K562 (cell line): ENCODE measurements at regions of chr12 and their contacts with region 1.

Region 1: DNA sequence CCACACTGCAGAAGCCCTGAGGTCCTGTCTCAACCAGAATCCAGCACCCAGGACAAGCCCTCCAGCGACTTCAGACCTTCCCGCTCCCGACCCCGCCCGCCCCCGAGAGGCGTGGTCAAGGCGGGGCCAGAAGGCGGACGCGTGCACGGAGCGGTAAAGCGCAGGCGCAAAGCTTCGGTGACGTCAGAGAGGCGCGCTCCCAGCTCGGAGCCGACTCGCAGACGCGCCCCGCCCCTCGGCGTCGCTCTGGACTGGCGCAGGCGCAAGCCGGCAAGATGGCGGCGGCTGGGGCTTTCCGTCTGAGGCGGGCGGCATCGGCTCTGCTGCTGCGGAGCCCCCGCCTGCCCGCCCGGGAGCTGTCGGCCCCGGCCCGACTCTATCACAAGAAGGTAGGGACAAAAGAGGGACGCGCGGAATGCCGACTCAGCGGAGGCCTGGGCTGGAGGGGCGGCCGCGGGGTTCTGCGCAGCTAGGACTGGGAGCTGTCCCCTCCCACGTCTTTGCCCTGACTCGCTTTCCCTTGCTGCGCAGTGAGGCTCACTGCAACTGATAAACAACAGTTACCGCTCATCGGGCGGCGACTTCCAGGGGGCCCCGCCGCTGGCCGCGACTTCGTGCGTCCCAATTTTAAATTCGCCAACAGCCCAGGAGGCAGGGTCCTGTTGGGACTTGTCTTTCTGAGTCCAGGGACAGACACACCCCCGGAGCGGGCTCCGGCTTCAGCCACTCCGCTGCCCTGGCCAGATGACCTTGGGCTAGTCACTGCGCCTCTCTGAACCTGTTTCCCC is at the start of gene ISCU:
- DNase-seq: peak; percentile 96 to 99 (median 98)
- ATAC-seq: peak; percentile 85
- H3K4me3 ChIP-seq: peak within 1 kb of the TSS; percentile 93
- H3K27ac ChIP-seq: peak within 1 kb of the TSS; percentile 97
- H3K4me1 ChIP-seq: peaks cover 8 to 26% of the 10 kb centered on the region in 2 experiments
- H3K27me3 ChIP-seq: no peaks in the 10 kb centered on the region
- CTCF ChIP-seq: 0 out of 6 replicates have a peak, but pooled peaks of 1 of the 3 experiments have one; percentile 5
- EP300 ChIP-seq: no peak
- POLR2A ChIP-seq: peak; percentile 87
- RAD21 ChIP-seq: no peak
- polyA plus RNA-seq, gene ISCU: 15.9 to 19.8 TPM

Region 2: GRCh38 chr12:108297895-108298760 is 264.4 kb before region 1 on chr12:
- CTCF ChIA-PET with region 1: no interaction called
- POLR2A ChIA-PET with region 1: no interaction called
- in situ Hi-C with region 1: no loop called
- intact Hi-C with region 1: no loop called
- DNase-seq: no peak
- ATAC-seq: no peak
- H3K4me3 ChIP-seq: no peak overlapping the region
- H3K27ac ChIP-seq: no peak overlapping the region
- H3K4me1 ChIP-seq: peaks cover 0 to 3% of the 10 kb centered on the region in 2 experiments; a peak in 1 of 5 replicates
- H3K27me3 ChIP-seq: peaks cover 14 to 20% of the 10 kb centered on the region in 2 experiments; a peak in 4 of 5 replicates
- CTCF ChIP-seq: no peak
- EP300 ChIP-seq: no peak
- POLR2A ChIP-seq: no peak
- RAD21 ChIP-seq: no peak

Region 3: DNA sequence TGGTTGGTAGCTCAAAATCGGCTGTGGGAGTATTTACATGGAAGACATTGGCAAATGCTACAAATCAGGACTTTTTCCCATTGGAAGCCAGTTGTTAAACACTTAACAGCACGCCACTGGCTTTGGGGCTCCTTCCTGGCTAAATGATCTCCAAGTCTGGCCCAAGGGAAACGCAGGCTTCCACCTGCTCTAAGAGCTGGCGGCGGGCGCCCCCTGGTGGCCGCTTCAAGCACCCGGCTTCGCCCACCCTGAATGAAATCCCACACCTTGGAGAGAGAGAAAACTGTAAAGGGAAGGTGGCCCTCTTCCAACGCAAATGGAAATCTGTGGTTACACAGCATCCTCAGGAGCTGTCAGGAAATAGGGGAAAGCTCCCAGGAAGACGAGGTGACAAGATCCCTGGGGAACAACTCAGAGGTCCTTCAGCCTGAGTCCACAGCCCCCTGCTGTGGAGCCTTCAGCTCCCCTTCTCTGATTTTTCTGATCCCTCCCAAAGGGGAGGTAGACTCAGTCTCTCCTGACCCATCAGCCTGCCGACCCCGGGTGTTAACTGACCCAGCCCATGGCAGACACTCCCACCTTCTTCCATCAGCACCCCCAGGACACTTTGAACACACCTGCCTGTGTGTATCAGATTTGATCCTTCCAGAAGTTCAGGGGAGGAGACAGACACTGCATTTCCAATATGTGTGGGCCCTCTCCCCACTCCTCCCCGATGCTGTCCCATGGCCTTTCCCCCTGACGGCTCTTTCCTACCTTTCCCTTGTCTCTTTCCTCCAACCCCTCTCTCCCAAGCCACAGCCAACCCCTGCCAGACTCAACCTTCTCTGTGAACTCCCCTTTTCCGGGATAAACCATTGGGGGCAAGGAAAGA is 55.8 kb after region 1 on chr12:
- CTCF ChIA-PET with region 1: interaction called, 30 read pairs
- POLR2A ChIA-PET with region 1: interaction called, 4 read pairs
- in situ Hi-C with region 1: loop called (anchors 5 kb)
- intact Hi-C with region 1: loop called (anchors 1 kb)
- DNase-seq: peak; percentile 82 to 91 (median 84)
- ATAC-seq: peak; percentile 94
- H3K4me3 ChIP-seq: no peak overlapping the region
- H3K27ac ChIP-seq: no peak overlapping the region
- H3K4me1 ChIP-seq: peaks cover 16 to 20% of the 10 kb centered on the region in 2 experiments; a peak in 3 of 5 replicates
- H3K27me3 ChIP-seq: no peaks in the 10 kb centered on the region
- CTCF ChIP-seq: peak; percentile 91 to 97 (median 96)
- EP300 ChIP-seq: no peak
- POLR2A ChIP-seq: no peak
- RAD21 ChIP-seq: peak; percentile 91 to 94

Region 4: DNA sequence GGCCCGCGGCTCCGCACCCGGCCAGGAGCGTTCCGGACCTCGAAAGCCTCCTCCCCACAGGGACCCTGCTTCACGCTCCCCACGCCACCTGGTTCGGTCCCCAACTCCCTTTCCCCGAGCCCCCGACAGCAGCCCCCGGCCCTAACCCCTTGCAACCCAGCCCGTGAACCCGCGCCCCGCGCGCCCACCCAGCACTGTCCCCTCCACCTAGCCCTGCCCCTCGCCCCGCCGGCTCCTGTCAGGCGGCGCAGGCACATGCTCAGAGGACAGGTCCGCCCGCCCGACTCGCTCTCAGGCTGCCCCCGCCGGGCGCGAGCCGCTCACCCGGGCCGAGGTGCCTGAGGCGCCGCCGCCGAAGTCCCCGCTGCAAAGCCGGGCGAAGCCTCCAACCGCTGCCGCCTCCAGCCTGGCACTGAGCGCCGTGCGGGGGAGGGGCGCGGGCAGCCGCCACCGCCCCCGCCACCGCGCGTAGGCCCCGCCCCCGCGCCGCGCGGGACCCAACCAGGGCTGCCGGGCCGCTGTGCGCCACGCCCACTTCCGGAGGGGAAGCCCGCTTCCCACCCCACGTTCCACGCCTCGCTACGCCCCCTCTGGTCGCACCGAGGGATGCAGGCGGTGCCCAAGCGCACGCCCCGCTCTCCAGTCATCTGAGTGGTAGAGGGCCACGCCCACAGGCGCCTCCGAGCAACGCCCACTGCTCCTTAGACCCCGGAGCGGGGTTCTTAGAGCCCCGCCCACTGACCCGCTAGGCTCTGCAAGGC is 168.7 kb after region 1 on chr12 and contains the start of gene CORO1C:
- CTCF ChIA-PET with region 1: no interaction called
- POLR2A ChIA-PET with region 1: no interaction called
- in situ Hi-C with region 1: no loop called
- intact Hi-C with region 1: loop called (anchors 5 kb)
- DNase-seq: peak; percentile 95 to 97 (median 96)
- ATAC-seq: peak; percentile 77
- H3K4me3 ChIP-seq: peak within 1 kb of the TSS; percentile 89
- H3K27ac ChIP-seq: peak within 1 kb of the TSS; percentile 93
- H3K4me1 ChIP-seq: peaks cover 21 to 32% of the 10 kb centered on the region in 2 experiments
- H3K27me3 ChIP-seq: no peaks in the 10 kb centered on the region
- CTCF ChIP-seq: peak; percentile 77 to 85 (median 80)
- EP300 ChIP-seq: no peak; the same call in 1 of the 2 replicates
- POLR2A ChIP-seq: peak; percentile 78
- RAD21 ChIP-seq: peak in 1 of 2 experiments; percentile 53; a peak in 3 of 4 replicates
- polyA plus RNA-seq, gene CORO1C: 55.2 to 68.6 TPM

Region 5: GRCh38 chr12:108856428-108857157 is 294.1 kb after region 1 on chr12:
- CTCF ChIA-PET with region 1: no interaction called
- POLR2A ChIA-PET with region 1: no interaction called
- in situ Hi-C with region 1: no loop called
- intact Hi-C with region 1: loop called (anchors 5 kb)
- DNase-seq: peak in 2 of 4 experiments; percentile 45 to 59
- ATAC-seq: peak; percentile 18
- H3K4me3 ChIP-seq: peak overlapping the region; percentile 46
- H3K27ac ChIP-seq: peak overlapping the region; percentile 67; the same call in 2 of the 3 replicates
- H3K4me1 ChIP-seq: peaks cover 33 to 44% of the 10 kb centered on the region in 2 experiments
- H3K27me3 ChIP-seq: peaks cover 0 to 6% of the 10 kb centered on the region in 2 experiments; a peak in 1 of 5 replicates
- CTCF ChIP-seq: no peak
- EP300 ChIP-seq: no peak
- POLR2A ChIP-seq: no peak
- RAD21 ChIP-seq: no peak

Region 6: GRCh38 chr12:109093022-109093918 is 530.7 kb after region 1 on chr12 and contains the start of gene ALKBH2:
- CTCF ChIA-PET with region 1: interaction called, 5 read pairs
- POLR2A ChIA-PET with region 1: no interaction called
- in situ Hi-C with region 1: loop called (anchors 5 kb)
- intact Hi-C with region 1: loop called (anchors 2 kb)
- DNase-seq: peak; percentile 86 to 96 (median 88)
- ATAC-seq: peak; percentile 77
- H3K4me3 ChIP-seq: peak within 1 kb of the TSS; percentile 47
- H3K27ac ChIP-seq: peak within 1 kb of the TSS; percentile 75
- H3K4me1 ChIP-seq: peaks cover 6 to 41% of the 10 kb centered on the region in 2 experiments; a peak in 4 of 5 replicates
- H3K27me3 ChIP-seq: no peaks in the 10 kb centered on the region
- CTCF ChIP-seq: peak; percentile 95 to 98 (median 98)
- EP300 ChIP-seq: no peak
- POLR2A ChIP-seq: peak; percentile 85
- RAD21 ChIP-seq: peak; percentile 89 to 93
- polyA plus RNA-seq, gene ALKBH2: 5.9 to 13.6 TPM